ENCODE measurements at regions of chr6 and their contacts with region 1.

Region 1: GRCh38 chr6:2783188-2783963 is 18.2 kb downstream of the WRNIP1 start:
- H3K4me3 ChIP-seq: no peak overlapping the region
- H3K27ac ChIP-seq: no peak overlapping the region
- H3K4me1 ChIP-seq: 0 out of 2 replicates have a peak, but pooled peaks cover 2% of the 10 kb centered on the region
- CTCF ChIP-seq: no peak

Region 2: GRCh38 chr6:2770171-2770570 is 13.2 kb before region 1 on chr6:
- CTCF ChIA-PET with region 1: interaction called, 46 read pairs
- POLR2A ChIA-PET with region 1: interaction called, 5 read pairs
- H3K4me3 ChIP-seq: peak overlapping the region; percentile 15
- H3K27ac ChIP-seq: no peak overlapping the region
- H3K4me1 ChIP-seq: peaks cover 24% of the 10 kb centered on the region
- CTCF ChIP-seq: no peak